ENCODE measurements at regions of chr5 and their contacts with region 1.

Region 1: GRCh38 chr5:128736553-128736952 is 198.5 kb upstream of the FBN2 start:
- DNase-seq: no peak
- H3K4me3 ChIP-seq: no peak overlapping the region
- H3K4me3 Mint-ChIP-seq: no peak overlapping the region
- H3K27ac Mint-ChIP-seq: no peak overlapping the region
- H3K4me1 ChIP-seq: no peaks in the 10 kb centered on the region
- H3K4me1 Mint-ChIP-seq: no peaks in the 10 kb centered on the region
- H3K27me3 ChIP-seq: no peaks in the 10 kb centered on the region
- H3K27me3 Mint-ChIP-seq: peaks cover 6% of the 10 kb centered on the region
- CTCF ChIP-seq: no peak

Region 2: DNA sequence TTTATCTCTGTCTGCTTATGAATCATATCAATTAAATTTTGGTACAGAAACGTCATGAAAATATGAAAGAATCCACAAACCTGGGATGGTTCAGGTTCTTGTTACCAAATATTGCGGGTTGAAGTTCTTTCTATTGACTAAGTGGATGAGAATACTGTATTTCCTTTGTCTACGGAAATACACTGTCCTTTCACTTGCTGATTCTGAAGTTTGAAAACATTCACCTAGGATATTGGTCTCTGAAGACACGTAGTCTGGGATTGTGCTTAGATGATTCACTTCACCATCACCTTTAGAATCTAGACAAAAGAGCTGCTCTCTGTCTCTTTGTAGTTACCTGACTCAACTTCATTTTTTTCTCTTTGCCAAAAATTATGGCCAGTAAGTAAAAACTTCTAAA is 420.9 kb before region 1 on chr5:
- CTCF ChIA-PET with region 1: no interaction called
- POLR2A ChIA-PET with region 1: no interaction called
- intact Hi-C with region 1: loop called (anchors 5 kb)
- DNase-seq: no peak
- H3K4me3 ChIP-seq: no peak overlapping the region
- H3K4me3 Mint-ChIP-seq: no peak overlapping the region
- H3K27ac Mint-ChIP-seq: no peak overlapping the region
- H3K4me1 ChIP-seq: no peaks in the 10 kb centered on the region
- H3K4me1 Mint-ChIP-seq: no peaks in the 10 kb centered on the region
- H3K27me3 ChIP-seq: no peaks in the 10 kb centered on the region; the same call in 1 of the 2 replicates
- H3K27me3 Mint-ChIP-seq: no peaks in the 10 kb centered on the region
- CTCF ChIP-seq: no peak

Region 3: DNA sequence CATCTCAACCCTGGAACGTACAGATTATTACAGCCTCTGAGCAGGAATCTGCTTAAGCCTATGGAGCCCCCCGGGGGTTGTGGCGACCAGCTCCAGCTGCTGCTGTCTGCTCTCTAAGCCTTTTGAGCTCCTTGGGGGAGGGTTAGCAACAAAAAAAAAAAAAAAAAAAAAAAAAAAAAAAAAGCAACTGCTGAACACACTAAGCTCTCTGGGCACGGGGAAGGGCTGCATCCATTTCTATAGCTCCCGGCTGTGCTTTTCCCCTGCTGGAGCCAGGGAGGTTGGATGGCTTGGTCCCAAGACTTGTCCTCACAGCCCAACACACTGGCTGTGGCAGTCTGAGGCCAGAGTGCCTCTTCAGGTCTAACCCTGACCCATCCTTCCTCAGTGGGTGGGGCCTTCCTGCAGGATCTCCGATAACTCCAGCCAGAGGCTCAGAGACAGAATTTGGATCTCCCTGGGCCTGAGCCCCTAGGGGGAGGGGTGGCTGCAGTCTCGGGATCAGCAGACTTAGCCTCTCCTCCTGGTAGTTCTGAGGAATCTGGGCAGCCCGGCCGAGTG is 280.6 kb before region 1 on chr5:
- CTCF ChIA-PET with region 1: no interaction called
- POLR2A ChIA-PET with region 1: no interaction called
- intact Hi-C with region 1: no loop called
- DNase-seq: no peak
- H3K4me3 ChIP-seq: no peak overlapping the region
- H3K4me3 Mint-ChIP-seq: no peak overlapping the region
- H3K27ac Mint-ChIP-seq: no peak overlapping the region
- H3K4me1 ChIP-seq: no peaks in the 10 kb centered on the region
- H3K4me1 Mint-ChIP-seq: peaks cover 6% of the 10 kb centered on the region
- H3K27me3 ChIP-seq: no peaks in the 10 kb centered on the region
- H3K27me3 Mint-ChIP-seq: no peaks in the 10 kb centered on the region
- CTCF ChIP-seq: no peak

Region 4: GRCh38 chr5:128777052-128777451 is 40.5 kb after region 1 on chr5:
- CTCF ChIA-PET with region 1: no interaction called
- POLR2A ChIA-PET with region 1: no interaction called
- intact Hi-C with region 1: no loop called
- DNase-seq: no peak
- H3K4me3 ChIP-seq: no peak overlapping the region
- H3K4me3 Mint-ChIP-seq: no peak overlapping the region
- H3K27ac Mint-ChIP-seq: no peak overlapping the region
- H3K4me1 ChIP-seq: no peaks in the 10 kb centered on the region
- H3K4me1 Mint-ChIP-seq: no peaks in the 10 kb centered on the region
- H3K27me3 ChIP-seq: no peaks in the 10 kb centered on the region
- H3K27me3 Mint-ChIP-seq: peaks cover 5% of the 10 kb centered on the region
- CTCF ChIP-seq: no peak

Measured in Caco-2 (cell line).